ENCODE measurements at regions of chr15 and their contacts with region 1.

Region 1: DNA sequence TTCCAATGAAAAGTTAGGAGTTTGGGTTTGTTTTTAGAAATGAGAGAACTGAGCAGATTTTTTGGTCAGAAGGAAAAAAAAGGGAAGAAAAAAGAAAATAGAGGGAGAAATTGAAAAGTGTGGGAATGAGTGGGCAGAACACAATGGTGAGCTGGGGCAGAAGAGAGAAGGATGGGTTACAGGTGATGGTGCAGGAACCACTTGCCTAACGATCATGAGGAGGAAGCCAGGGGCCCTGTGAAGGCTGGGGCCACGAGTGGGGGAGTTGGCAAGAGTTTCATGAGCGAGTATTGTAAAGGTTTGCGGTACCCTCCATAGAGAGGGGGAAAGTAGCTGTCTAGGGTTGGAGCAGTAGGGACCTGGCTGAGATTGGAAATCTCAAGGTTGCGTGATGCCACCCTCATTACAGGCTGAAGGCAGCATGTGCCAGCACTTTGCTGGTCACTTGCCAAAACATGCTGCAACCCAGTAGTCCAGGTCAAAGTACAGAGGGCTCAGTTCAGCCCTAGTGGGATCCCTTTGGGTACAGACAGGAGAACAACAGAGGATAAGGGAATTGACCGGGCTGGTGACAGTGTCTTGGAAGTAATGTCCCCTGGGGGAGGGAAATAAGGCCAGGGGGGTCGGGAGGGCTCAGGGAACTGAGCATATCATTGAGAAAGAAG is 6.6 kb downstream of the IVD start:
- DNase-seq: no peak
- H3K4me3 ChIP-seq: no peak overlapping the region
- H3K27ac ChIP-seq: no peak overlapping the region
- H3K4me1 ChIP-seq: peaks cover 0 to 5% (median 0%) of the 10 kb centered on the region in 3 donors
- H3K27me3 ChIP-seq: no peaks in the 10 kb centered on the region
- CTCF ChIP-seq: no peak
- POLR2A ChIP-seq: no peak

Region 2: GRCh38 chr15:40367686-40368611 is 44.3 kb before region 1 on chr15:
- intact Hi-C with region 1: loop called (anchors 10 kb)
- DNase-seq: no peak
- H3K4me3 ChIP-seq: peak overlapping the region; percentile 20 to 62 (median 36)
- H3K27ac ChIP-seq: peak overlapping the region; percentile 22 to 57 (median 40)
- H3K4me1 ChIP-seq: peaks cover 13 to 22% (median 14%) of the 10 kb centered on the region in 3 donors
- H3K27me3 ChIP-seq: peaks cover 0 to 36% (median 0%) of the 10 kb centered on the region in 4 donors
- CTCF ChIP-seq: peak; percentile 71 to 100 (median 98)
- POLR2A ChIP-seq: no peak

Measured in esophagus squamous epithelium (tissue), 5 donors.